ENCODE measurements at regions of chr1 and their contacts with region 1.

Region 1: GRCh38 chr1:29181413-29182225 is at the start of gene SRSF4:
- DNase-seq: peak; percentile 98 to 100 (median 99)
- H3K4me3 ChIP-seq: peak within 1 kb of the TSS; percentile 85
- H3K4me3 Mint-ChIP-seq: peak within 1 kb of the TSS; percentile 91 to 97 (median 94)
- H3K27ac ChIP-seq: peak within 1 kb of the TSS; percentile 97
- H3K27ac Mint-ChIP-seq: peak within 1 kb of the TSS; percentile 93 to 97 (median 96)
- H3K4me1 ChIP-seq: peaks cover 46% of the 10 kb centered on the region
- H3K4me1 Mint-ChIP-seq: peaks cover 41 to 57% (median 55%) of the 10 kb centered on the region in 3 donors
- H3K27me3 ChIP-seq: no peaks in the 10 kb centered on the region
- H3K27me3 Mint-ChIP-seq: no peaks in the 10 kb centered on the region
- total RNA-seq, gene SRSF4: 112 to 119 TPM

Region 2: DNA sequence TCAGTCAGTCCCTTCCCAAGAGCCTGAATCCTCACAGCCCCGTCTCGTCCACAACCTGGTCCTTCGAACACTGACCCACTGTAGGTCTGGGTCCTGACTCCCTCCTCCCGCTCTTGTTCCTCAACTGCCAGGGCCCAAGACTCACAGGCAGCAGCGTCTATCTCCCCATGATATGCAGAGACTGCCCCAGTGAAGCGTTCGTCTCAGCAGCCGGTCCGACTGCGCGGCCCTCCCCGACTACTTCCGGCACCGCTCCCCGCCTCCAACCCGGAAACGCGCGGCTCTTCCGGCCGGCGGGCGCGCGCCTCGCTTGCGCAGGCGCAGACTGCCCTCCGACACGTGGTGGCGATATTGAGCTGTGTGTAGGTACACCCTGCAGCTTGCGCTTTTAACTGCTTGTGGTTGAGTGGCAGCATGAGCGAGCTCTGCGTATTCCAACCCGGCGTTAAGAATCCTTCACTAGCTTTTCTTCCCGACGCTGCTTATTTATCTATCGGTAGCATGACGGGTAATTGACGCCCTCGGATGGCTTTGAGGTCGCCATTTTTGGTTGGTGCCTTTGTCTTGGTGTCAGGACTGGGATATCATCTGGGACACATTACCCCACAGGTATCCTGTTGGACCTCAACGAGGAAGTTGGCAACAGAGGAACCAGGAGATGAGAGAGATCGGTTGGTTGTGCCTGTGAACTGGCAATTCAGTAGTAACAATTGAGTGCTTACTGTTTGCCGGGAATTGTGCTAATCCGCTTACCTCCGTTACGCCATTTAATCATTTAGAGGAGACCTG is 538.6 kb before region 1 on chr1 and contains the start of gene TAF12:
- CTCF ChIA-PET with region 1: no interaction called
- POLR2A ChIA-PET with region 1: interaction called, 14 read pairs
- DNase-seq: peak; percentile 86 to 95 (median 89)
- H3K4me3 ChIP-seq: peak within 1 kb of the TSS; percentile 98
- H3K4me3 Mint-ChIP-seq: peak within 1 kb of the TSS; percentile 94 to 99 (median 98)
- H3K27ac ChIP-seq: peak within 1 kb of the TSS; percentile 91
- H3K27ac Mint-ChIP-seq: peak within 1 kb of the TSS; percentile 91 to 100 (median 98)
- H3K4me1 ChIP-seq: peaks cover 40% of the 10 kb centered on the region
- H3K4me1 Mint-ChIP-seq: peaks cover 46 to 67% (median 56%) of the 10 kb centered on the region in 3 donors
- H3K27me3 ChIP-seq: no peaks in the 10 kb centered on the region
- H3K27me3 Mint-ChIP-seq: peaks cover 0 to 4% of the 10 kb centered on the region in 2 donors
- total RNA-seq, gene TAF12: 37.8 to 39.0 TPM

Region 3: DNA sequence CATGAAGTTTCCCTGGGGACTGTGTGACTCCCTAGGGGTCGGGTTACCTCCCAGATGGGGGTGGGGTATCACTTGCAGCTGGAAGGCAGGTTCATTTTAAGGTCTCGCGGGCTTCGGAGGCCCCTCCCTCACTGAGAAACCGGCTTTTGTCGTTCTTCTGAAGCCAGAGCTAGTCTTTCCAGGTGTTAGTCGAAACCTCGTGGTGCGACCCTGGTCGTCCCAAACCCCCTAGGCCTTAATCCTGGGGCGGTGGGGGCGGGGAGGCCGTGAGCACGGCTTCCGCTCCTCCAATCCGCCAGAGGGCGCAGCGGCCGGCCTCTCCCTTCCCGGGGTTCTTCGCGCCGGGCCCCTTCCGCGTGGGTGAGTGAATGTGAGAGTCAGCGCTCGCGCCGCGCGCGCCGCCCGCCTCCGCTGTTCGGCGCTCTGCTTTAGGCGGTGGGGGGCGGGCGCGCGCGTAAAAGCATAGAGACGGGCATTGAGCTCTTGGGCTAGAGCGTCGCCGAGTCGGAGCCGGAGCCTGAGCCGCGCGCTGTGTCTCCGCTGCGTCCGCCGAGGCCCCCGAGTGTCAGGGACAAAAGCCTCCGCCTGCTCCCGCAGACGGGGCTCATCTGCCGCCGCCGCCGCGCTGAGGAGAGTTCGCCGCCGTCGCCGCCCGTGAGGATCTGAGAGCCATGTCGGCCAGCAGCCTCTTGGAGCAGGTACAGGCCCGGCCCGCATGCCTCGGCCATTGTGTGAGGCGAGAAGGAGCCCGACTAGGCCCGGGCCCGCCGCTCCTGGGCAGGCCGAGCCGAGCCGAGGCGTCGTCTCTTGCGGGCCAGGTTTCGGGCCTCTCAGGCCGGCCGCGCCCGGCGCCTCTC is 444.9 kb before region 1 on chr1 and contains the start of gene YTHDF2:
- CTCF ChIA-PET with region 1: interaction called, 9 read pairs
- POLR2A ChIA-PET with region 1: interaction called, 27 read pairs
- DNase-seq: peak; percentile 95 to 98 (median 97)
- H3K4me3 ChIP-seq: peak within 1 kb of the TSS; percentile 79
- H3K4me3 Mint-ChIP-seq: peak within 1 kb of the TSS; percentile 89 to 100 (median 97)
- H3K27ac ChIP-seq: peak within 1 kb of the TSS; percentile 94
- H3K27ac Mint-ChIP-seq: peak within 1 kb of the TSS; percentile 87 to 99 (median 96)
- H3K4me1 ChIP-seq: peaks cover 27% of the 10 kb centered on the region
- H3K4me1 Mint-ChIP-seq: peaks cover 33 to 46% (median 39%) of the 10 kb centered on the region in 3 donors
- H3K27me3 ChIP-seq: no peaks in the 10 kb centered on the region
- H3K27me3 Mint-ChIP-seq: peaks cover 0 to 3% of the 10 kb centered on the region in 2 donors
- total RNA-seq, gene YTHDF2: 98.3 to 105 TPM

Region 4: DNA sequence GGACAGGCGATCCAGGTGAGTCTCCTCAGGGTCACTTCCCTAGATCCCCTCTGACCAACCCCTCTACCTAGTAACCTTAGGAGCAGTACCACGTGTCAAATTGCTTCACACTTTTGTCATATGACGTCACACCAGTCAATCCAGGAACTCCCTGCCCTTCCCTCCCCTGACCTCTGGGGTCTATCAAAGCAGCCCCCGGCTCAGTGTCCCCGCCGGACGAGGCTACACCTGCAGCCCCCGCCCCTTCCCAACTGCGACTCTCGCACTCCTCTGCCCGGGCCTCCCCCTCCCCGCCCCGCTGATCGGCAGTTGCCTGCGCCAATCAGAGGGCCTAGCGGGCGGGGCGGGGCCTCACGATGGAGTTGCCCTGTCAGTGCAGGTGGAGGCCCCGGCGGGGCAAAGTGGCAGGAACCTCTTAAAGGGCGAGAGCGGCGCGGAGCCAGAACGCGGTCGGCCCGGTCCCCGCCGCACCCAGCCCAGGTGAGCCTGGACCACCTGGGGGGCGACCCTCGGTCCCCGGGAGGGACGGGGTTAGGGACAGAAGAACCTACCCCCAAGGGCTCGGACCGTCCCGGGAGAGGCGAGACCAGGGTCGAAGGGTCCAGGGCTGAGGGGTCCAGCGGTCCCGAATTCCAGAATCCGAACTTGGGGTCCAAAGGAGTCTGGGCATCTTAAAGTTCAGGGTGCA is 294.7 kb before region 1 on chr1:
- CTCF ChIA-PET with region 1: interaction called, 5 read pairs
- POLR2A ChIA-PET with region 1: interaction called, 11 read pairs
- DNase-seq: peak; percentile 85 to 92 (median 88)
- H3K4me3 ChIP-seq: peak overlapping the region; percentile 88
- H3K4me3 Mint-ChIP-seq: peak overlapping the region; percentile 82 to 98 (median 90)
- H3K27ac ChIP-seq: peak overlapping the region; percentile 83
- H3K27ac Mint-ChIP-seq: peak overlapping the region; percentile 88 to 98 (median 97)
- H3K4me1 ChIP-seq: peaks cover 47% of the 10 kb centered on the region
- H3K4me1 Mint-ChIP-seq: peaks cover 53 to 78% (median 68%) of the 10 kb centered on the region in 3 donors
- H3K27me3 ChIP-seq: no peaks in the 10 kb centered on the region
- H3K27me3 Mint-ChIP-seq: peaks cover 0 to 5% of the 10 kb centered on the region in 2 donors

Region 5: GRCh38 chr1:29124366-29125236 is 57.0 kb before region 1 on chr1:
- CTCF ChIA-PET with region 1: interaction called, 5 read pairs
- POLR2A ChIA-PET with region 1: interaction called, 15 read pairs
- DNase-seq: peak; percentile 37 to 66 (median 38)
- H3K4me3 ChIP-seq: peak overlapping the region; percentile 43
- H3K4me3 Mint-ChIP-seq: peak overlapping the region; percentile 52 to 87 (median 72)
- H3K27ac ChIP-seq: no peak overlapping the region
- H3K27ac Mint-ChIP-seq: peak overlapping the region in 1 of 8 donors; percentile 47
- H3K4me1 ChIP-seq: peaks cover 20% of the 10 kb centered on the region
- H3K4me1 Mint-ChIP-seq: peaks cover 6 to 26% (median 14%) of the 10 kb centered on the region in 3 donors
- H3K27me3 ChIP-seq: peaks cover 8% of the 10 kb centered on the region
- H3K27me3 Mint-ChIP-seq: peaks cover 15 to 23% of the 10 kb centered on the region in 2 donors

Region 6: GRCh38 chr1:29197585-29197924 is 15.9 kb after region 1 on chr1:
- CTCF ChIA-PET with region 1: interaction called, 26 read pairs
- POLR2A ChIA-PET with region 1: interaction called, 6 read pairs
- DNase-seq: peak in 2 of 5 donors; percentile 23 to 46
- H3K4me3 ChIP-seq: no peak overlapping the region
- H3K4me3 Mint-ChIP-seq: no peak overlapping the region
- H3K27ac ChIP-seq: no peak overlapping the region
- H3K27ac Mint-ChIP-seq: no peak overlapping the region
- H3K4me1 ChIP-seq: no peaks in the 10 kb centered on the region
- H3K4me1 Mint-ChIP-seq: peaks cover 0 to under 1% (median under 1%) of the 10 kb centered on the region in 3 donors
- H3K27me3 ChIP-seq: no peaks in the 10 kb centered on the region
- H3K27me3 Mint-ChIP-seq: no peaks in the 10 kb centered on the region

Region 7: GRCh38 chr1:29202584-29203340 is 21.1 kb after region 1 on chr1:
- CTCF ChIA-PET with region 1: interaction called, 26 read pairs
- POLR2A ChIA-PET with region 1: interaction called, 6 read pairs
- DNase-seq: peak; percentile 69 to 90 (median 83)
- H3K4me3 ChIP-seq: no peak overlapping the region
- H3K4me3 Mint-ChIP-seq: no peak overlapping the region
- H3K27ac ChIP-seq: peak overlapping the region; percentile 35
- H3K27ac Mint-ChIP-seq: peak overlapping the region in 1 of 8 donors; percentile 60
- H3K4me1 ChIP-seq: no peaks in the 10 kb centered on the region
- H3K4me1 Mint-ChIP-seq: peaks cover 0 to 5% (median 3%) of the 10 kb centered on the region in 3 donors
- H3K27me3 ChIP-seq: no peaks in the 10 kb centered on the region
- H3K27me3 Mint-ChIP-seq: no peaks in the 10 kb centered on the region

Measured in CD8-positive, alpha-beta memory T cell (primary cell).